HAP-1 (cell line): ENCODE measurements at regions of chr17 and their contacts with region 1.

Region 1: DNA sequence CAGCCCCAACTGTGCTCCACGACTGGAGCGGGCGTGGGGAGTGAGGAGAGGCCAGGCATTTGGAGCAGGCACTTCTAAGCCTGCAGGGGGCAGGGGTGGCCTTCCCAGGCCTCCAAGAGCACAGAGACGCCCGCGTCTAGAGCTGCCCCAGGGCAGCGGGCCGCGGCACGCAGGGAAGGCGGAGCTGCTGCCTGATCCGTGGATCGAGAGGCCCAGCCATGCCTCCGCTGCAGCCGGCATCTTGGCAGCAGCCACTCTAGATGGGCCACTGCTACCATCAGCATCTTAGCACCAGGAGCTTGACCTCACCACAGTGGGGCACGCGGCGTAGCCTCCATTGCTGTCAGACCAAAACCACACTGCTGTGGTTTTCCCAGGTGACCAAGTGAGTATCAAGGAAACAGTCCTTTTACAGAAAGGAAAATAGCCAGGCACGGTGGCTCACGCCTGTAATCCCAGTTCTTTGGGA is 20.4 kb upstream of the WDR45B start:
- DNase-seq: peak; percentile 71 to 86
- H3K4me3 ChIP-seq: no peak overlapping the region
- H3K4me1 ChIP-seq: 0 out of 2 replicates have a peak, but pooled peaks cover 3% of the 10 kb centered on the region
- H3K27me3 ChIP-seq: no peaks in the 10 kb centered on the region

Region 2: DNA sequence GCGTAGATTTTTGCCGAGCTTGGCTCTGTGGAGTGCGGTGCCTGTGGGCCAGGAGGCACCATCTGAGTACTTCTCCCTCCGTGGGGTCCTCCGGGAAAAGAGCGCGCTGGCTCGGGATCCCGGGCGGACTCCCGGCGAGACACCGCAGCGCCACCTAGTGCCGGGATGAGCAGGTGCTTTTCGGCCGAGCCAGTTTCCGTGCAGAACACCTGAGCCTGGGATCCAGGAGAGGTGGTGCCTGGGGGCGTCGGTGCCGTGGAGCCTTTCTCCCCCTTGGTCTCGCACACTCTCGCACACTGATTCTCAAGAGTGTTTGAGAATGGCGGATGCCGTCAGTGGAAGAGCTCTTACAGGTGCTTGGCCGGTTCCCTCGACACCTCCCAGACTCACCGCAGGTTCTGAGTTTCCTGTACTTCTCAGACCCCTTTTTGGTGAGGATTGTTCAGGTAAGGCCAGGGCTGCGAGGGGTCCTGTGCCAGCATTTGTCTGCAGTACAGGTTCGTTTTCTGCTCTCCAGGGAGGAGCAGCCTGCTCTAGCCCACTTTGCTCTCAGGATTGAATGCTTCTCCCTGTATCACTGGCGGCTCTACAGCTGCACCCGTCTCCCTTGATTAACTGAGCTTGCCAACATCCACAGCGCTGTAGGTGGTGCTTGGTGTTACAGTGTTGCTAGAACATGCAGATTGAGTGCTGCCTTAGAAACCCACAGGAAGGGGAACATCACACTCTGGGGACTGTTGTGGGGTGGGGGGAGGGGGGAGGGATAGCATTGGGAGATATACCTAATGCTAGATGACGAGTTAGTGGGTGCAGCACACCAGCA is 106.5 kb after region 1 on chr17:
- in situ Hi-C with region 1: loop called (anchors 5 kb)
- DNase-seq: peak; percentile 31 to 84
- H3K4me3 ChIP-seq: no peak overlapping the region
- H3K4me1 ChIP-seq: no peaks in the 10 kb centered on the region
- H3K27me3 ChIP-seq: no peaks in the 10 kb centered on the region

Region 3: DNA sequence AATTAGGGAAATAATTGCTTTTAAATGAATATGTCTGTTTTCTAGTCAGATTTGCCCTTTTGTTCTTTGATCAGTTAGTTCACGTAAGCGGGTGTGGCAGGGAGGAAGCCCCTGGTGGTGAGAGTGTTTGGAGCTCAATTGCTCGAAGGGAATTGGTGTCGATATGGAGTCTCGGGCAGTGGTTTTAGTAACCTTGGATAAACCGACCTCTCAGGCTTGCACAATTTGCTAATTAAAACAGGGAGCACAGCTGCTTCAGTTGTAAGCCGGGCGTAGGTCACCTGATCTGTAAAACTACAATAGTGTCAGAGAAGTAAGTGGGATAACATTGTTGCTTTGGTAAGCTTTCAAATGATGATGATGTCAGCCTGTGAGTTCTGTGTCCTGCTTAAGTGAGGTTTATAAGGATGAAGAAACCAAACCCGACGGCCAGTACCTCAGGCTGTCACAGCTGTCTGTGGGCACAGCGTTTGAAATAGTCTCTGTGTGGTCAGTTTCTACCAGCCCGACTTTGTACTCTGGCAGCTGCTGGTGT is 168.2 kb after region 1 on chr17:
- in situ Hi-C with region 1: no loop called
- DNase-seq: peak in 1 of 2 experiments; percentile 42
- H3K4me3 ChIP-seq: no peak overlapping the region
- H3K4me1 ChIP-seq: peaks cover 18% of the 10 kb centered on the region
- H3K27me3 ChIP-seq: no peaks in the 10 kb centered on the region